ENCODE measurements at regions of chr6 and their contacts with region 1.

Region 1: DNA sequence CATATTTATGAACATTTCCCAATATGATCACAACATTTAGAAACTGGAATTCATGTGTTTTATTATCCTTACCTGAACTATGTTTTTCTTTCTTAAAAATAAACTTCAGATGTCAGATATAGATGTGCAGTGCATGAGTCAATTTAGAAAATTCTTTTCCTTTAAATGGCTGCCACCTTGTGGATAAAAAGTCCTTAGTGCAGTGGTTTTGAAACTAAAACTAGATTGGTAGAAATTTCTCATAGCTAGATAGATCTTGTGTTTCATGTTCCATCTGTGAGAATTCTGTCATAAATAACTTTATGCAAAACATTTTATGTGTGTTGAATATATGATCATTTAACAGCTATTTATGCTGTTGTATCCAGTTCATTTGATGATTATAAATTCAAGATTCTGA is 134.9 kb downstream of the KLHL32 start:
- DNase-seq: peak; percentile 17
- H3K4me3 ChIP-seq: no peak overlapping the region
- H3K27ac ChIP-seq: no peak overlapping the region
- H3K4me1 ChIP-seq: no peaks in the 10 kb centered on the region
- H3K27me3 ChIP-seq: no peaks in the 10 kb centered on the region
- CTCF ChIP-seq: peak; percentile 38 to 54

Region 2: DNA sequence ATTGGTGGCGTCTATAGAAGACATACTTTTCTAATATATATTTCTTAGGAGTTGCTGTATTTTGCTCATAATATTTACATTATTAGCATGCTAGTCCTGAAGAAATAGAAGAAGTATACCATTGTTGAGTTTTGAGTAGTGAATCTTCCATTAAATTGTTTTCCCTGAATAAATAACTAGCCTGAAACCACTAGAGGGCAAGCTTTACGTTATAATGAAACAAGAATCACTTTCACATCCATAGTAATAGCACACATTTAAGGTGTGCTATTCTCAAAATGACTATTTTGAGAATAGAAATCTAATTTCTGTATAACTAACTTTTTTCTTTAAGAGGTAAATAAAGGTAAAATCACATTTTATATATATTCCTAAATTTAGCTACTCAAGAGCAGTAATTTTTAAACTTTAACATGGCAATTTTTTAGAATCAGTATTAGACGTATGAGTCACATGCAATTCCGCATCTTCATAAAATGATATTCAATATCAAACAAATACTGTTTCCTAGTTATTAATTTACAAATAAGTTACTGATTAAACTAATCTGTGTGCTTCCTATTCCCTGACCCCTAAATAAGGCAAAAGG is 1695.4 kb before region 1 on chr6:
- CTCF ChIA-PET with region 1: no interaction called
- dilution Hi-C with region 1: no loop called
- in situ Hi-C with region 1: no loop called
- intact Hi-C with region 1: loop called (anchors 10 kb)
- DNase-seq: no peak
- H3K4me3 ChIP-seq: no peak overlapping the region
- H3K27ac ChIP-seq: no peak overlapping the region
- H3K4me1 ChIP-seq: no peaks in the 10 kb centered on the region
- H3K27me3 ChIP-seq: no peaks in the 10 kb centered on the region
- CTCF ChIP-seq: peak; percentile 41 to 44

Region 3: GRCh38 chr6:96391776-96392360 is 667.6 kb before region 1 on chr6:
- CTCF ChIA-PET with region 1: no interaction called
- dilution Hi-C with region 1: no loop called
- in situ Hi-C with region 1: no loop called
- intact Hi-C with region 1: loop called (anchors 10 kb)
- DNase-seq: no peak
- H3K4me3 ChIP-seq: no peak overlapping the region
- H3K27ac ChIP-seq: no peak overlapping the region
- H3K4me1 ChIP-seq: no peaks in the 10 kb centered on the region
- H3K27me3 ChIP-seq: no peaks in the 10 kb centered on the region
- CTCF ChIP-seq: no peak

Region 4: DNA sequence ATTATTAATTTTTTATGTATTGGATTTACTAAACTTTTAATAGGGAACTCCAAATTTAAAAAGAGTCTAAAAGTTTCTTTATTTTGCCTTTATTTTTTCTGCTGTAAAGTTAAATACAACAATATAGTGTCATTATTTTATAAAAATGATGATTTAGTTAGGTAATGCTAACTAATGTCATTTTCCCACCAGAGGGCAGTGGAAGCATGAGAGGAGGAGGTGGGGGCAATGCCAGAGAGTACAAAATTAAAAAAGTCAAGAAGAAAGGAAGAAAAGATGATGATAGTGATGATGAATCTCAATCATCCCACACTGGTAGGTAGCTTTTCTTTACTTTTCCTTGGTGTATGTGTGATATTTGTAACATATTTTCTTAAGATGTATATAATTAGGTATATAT is 516.8 kb before region 1 on chr6:
- CTCF ChIA-PET with region 1: no interaction called
- dilution Hi-C with region 1: no loop called
- in situ Hi-C with region 1: no loop called
- intact Hi-C with region 1: loop called (anchors 5 kb)
- DNase-seq: no peak
- H3K4me3 ChIP-seq: no peak overlapping the region
- H3K27ac ChIP-seq: no peak overlapping the region
- H3K4me1 ChIP-seq: no peaks in the 10 kb centered on the region
- H3K27me3 ChIP-seq: no peaks in the 10 kb centered on the region
- CTCF ChIP-seq: peak in 1 of 2 donors; percentile 29

Region 5: DNA sequence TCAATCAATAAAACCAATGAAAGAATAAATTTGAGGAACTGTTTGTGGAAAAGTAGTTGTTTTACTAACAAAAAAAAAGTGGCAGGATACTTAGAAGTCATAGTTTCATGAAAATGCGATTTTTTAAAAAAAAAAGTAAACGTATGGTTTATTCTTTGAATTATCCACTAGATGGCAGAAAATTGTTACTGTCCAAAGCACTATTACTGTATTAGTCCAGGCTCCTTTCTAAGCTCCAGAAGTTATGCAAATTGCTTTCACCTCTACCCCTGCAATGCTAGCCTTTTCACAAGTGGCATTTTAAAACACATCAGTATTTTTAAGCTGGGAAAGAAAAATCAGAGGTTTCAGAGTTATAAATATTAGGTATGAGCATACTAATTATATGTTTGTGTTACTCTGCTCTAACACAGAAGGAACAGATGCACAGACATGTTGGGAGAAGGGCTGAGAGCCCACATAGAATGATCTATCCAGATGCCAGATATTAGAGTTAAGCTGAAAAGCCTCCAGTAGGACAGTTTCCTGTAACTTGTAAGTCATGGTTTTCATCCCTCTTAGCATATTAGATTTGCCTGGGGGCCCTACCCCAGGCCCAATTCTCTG is 432.6 kb before region 1 on chr6:
- CTCF ChIA-PET with region 1: no interaction called
- dilution Hi-C with region 1: no loop called
- in situ Hi-C with region 1: loop called (anchors 5 kb)
- intact Hi-C with region 1: loop called (anchors 1 kb)
- DNase-seq: peak; percentile 1
- H3K4me3 ChIP-seq: no peak overlapping the region
- H3K27ac ChIP-seq: no peak overlapping the region
- H3K4me1 ChIP-seq: no peaks in the 10 kb centered on the region
- H3K27me3 ChIP-seq: peaks cover 4% of the 10 kb centered on the region
- CTCF ChIP-seq: peak; percentile 7 to 40

Region 6: DNA sequence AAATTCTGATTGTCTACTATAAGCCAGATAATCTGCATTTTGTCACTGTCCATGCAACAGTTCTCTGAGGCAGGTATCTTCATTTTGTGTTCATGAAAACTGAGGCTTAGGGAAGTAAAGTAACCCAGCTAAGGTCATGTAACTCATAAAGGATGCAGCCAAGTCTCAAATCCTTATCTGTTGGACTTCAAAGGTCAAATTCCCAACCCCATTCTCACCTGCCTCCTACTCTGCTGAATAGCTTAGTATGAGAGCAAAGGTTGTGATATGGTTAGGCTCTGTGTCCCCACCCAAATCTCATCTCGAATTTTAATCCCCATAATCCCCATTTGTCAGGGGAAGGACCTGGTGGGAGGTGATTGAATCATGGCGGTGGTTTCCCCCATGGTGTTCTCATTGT is 44.9 kb before region 1 on chr6:
- CTCF ChIA-PET with region 1: no interaction called
- dilution Hi-C with region 1: no loop called
- in situ Hi-C with region 1: no loop called
- intact Hi-C with region 1: no loop called
- DNase-seq: no peak
- H3K4me3 ChIP-seq: no peak overlapping the region
- H3K27ac ChIP-seq: no peak overlapping the region
- H3K4me1 ChIP-seq: no peaks in the 10 kb centered on the region
- H3K27me3 ChIP-seq: no peaks in the 10 kb centered on the region
- CTCF ChIP-seq: no peak